ENCODE measurements at regions of chr12 and their contacts with region 1.

Region 1: GRCh38 chr12:109880016-109880931 is at the start of gene GLTP:
- DNase-seq: peak; percentile 48 to 91 (median 73)
- H3K4me3 ChIP-seq: peak within 1 kb of the TSS; percentile 66 to 98 (median 87)
- H3K27ac ChIP-seq: peak within 1 kb of the TSS in 58 of 59 donors; percentile 32 to 99 (median 92)
- H3K27me3 ChIP-seq: no peaks in the 10 kb centered on the region
- CTCF ChIP-seq: peak in 52 of 56 donors; percentile 9 to 93 (median 68)
- total RNA-seq, gene GLTP: 20.7 to 126 (median 43.1) TPM

Region 2: GRCh38 chr12:109719236-109720022 is 160.8 kb before region 1 on chr12:
- intact Hi-C with region 1: loop called in 1 of 2 experiments (anchors 10 kb)
- DNase-seq: no peak
- H3K4me3 ChIP-seq: peak overlapping the region in 37 of 59 donors; percentile 6 to 89 (median 78)
- H3K27ac ChIP-seq: peak overlapping the region in 58 of 59 donors; percentile 20 to 97 (median 84)
- H3K27me3 ChIP-seq: peaks cover 0 to 5% (median 0%) of the 10 kb centered on the region in 45 donors
- CTCF ChIP-seq: peak in 41 of 56 donors; percentile 12 to 53 (median 30)

Region 3: DNA sequence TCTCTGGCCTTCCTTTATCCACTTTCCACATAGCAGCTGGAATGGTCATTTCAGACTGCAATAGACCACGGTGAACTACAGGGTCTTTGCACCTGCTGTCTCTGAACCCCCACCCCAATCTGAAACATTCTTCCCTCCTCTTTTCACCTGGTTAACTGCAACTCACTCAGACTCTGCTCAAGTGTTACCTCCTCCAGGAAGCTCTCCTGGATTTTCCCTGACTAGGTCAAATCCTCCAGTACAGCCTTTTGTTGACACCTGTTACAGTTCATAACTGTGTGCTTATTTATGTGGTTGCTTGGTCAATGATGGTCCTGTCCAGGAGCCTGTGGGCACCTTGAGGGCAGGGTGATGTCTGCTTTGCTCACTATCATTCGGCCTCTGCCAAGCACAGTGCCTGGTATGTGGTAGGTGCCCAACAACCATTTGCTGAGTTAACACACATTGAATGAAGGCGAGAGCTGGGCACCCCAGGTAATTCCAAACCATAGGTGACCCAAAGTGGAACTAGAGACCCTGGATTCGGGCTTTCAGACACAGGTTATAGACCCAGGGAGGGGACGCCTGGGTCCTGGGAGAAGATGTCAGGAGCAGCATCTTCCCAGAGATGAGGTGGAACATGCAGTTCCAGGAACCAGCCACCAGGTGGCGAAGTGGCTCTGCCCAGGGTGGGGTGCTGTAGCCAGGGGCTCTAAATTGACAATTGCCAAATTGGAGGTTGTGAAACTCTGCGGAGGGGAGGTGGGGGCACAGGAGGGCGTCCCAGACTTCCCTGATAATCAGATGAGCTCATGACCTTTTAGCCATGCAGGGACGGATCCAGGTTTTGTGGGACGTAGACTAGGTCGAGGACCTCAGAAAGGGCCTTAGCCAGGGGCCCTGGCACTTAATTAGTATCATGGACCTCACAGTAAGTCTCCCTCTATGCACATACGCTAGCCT is 75.2 kb before region 1 on chr12:
- intact Hi-C with region 1: loop called (anchors 2 kb)
- DNase-seq: peak in 9 of 10 donors; percentile 57 to 81 (median 70)
- H3K4me3 ChIP-seq: no peak overlapping the region
- H3K27ac ChIP-seq: peak overlapping the region in 1 of 59 donors; percentile 26
- H3K27me3 ChIP-seq: no peaks in the 10 kb centered on the region
- CTCF ChIP-seq: peak; percentile 91 to 100 (median 98)

Region 4: DNA sequence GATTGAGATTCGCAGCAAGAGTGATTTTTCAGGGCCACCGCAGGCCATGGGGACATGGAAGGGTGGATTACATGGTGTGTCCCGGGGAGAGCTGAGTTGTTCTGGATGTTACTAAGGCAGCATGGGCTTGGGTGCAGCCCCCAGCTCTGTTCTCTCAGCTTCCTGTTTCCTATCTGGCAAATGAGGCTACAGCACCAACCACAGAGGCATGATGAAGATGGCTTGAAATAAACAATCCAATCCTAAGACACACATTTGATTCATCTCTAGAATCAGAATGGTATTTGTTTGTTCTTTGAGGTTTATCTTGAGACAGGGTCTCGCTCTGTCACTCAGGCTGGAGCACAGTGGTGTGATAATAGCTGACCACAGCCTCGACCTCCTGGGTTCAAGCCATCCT is 21.5 kb before region 1 on chr12:
- intact Hi-C with region 1: loop called (anchors 1 to 2 kb)
- DNase-seq: no peak
- H3K4me3 ChIP-seq: no peak overlapping the region
- H3K27ac ChIP-seq: peak overlapping the region in 46 of 59 donors; percentile 1 to 99 (median 67)
- H3K27me3 ChIP-seq: no peaks in the 10 kb centered on the region
- CTCF ChIP-seq: no peak

Region 5: GRCh38 chr12:109863847-109864712 is 16.2 kb before region 1 on chr12:
- intact Hi-C with region 1: loop called in 1 of 2 experiments (anchors 2 kb)
- DNase-seq: peak in 9 of 10 donors; percentile 74 to 92 (median 86)
- H3K4me3 ChIP-seq: peak overlapping the region in 7 of 59 donors; percentile 1 to 25 (median 5)
- H3K27ac ChIP-seq: peak overlapping the region; percentile 85 to 99 (median 96)
- H3K27me3 ChIP-seq: no peaks in the 10 kb centered on the region
- CTCF ChIP-seq: peak in 12 of 56 donors; percentile 7 to 45 (median 24)